Activated B cell treated with CpG ODN at 0.5 μM for 24 hours (primary cell): ENCODE measurements at regions of chr11 and their contacts with region 1.

Region 1: DNA sequence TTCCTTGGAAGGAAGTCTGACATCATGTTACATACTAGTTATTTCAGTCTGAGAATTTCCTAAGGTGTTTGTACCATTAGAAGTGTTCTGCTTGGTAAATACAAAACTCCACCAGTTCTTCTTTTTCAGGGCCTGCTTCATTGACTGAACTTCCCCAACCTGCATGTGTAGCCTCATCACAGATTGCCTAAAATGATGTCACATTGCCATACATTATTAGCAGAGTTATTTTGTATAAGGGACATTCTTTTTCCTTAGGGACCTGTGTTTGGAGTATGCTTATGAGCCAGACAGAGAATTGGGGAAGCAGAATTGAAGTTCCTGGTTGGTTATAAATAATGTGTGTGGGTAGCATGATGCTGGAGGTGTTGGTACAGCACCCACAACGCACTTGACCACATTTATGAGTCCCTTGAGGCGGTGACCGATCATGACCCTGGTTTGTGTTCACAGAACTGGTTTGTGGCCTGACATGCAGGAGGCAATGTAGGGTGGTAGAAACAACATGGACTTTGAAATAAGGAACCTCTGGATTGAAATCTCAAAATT is 16.4 kb upstream of the MMP7 start:
- DNase-seq: peak; percentile 52
- ATAC-seq: peak; percentile 79
- H3K4me3 Mint-ChIP-seq: peak overlapping the region; percentile 52
- H3K27ac Mint-ChIP-seq: peak overlapping the region; percentile 91
- H3K4me1 Mint-ChIP-seq: peaks cover 72% of the 10 kb centered on the region
- H3K27me3 Mint-ChIP-seq: no peaks in the 10 kb centered on the region
- CTCF ChIP-seq: no peak

Region 2: GRCh38 chr11:101914738-101915426 is 632.1 kb before region 1 on chr11 and contains the start of gene CEP126:
- CTCF ChIA-PET with region 1: no interaction called
- POLR2A ChIA-PET with region 1: no interaction called
- intact Hi-C with region 1: loop called (anchors 5 kb)
- DNase-seq: peak; percentile 98
- ATAC-seq: peak; percentile 90
- H3K4me3 Mint-ChIP-seq: peak within 1 kb of the TSS; percentile 94
- H3K27ac Mint-ChIP-seq: peak within 1 kb of the TSS; percentile 95
- H3K4me1 Mint-ChIP-seq: peaks cover 27% of the 10 kb centered on the region
- H3K27me3 Mint-ChIP-seq: peaks cover 10% of the 10 kb centered on the region
- CTCF ChIP-seq: no peak
- total RNA-seq, gene CEP126: 1.4 and 1.5 TPM in 2 replicates

Region 3: DNA sequence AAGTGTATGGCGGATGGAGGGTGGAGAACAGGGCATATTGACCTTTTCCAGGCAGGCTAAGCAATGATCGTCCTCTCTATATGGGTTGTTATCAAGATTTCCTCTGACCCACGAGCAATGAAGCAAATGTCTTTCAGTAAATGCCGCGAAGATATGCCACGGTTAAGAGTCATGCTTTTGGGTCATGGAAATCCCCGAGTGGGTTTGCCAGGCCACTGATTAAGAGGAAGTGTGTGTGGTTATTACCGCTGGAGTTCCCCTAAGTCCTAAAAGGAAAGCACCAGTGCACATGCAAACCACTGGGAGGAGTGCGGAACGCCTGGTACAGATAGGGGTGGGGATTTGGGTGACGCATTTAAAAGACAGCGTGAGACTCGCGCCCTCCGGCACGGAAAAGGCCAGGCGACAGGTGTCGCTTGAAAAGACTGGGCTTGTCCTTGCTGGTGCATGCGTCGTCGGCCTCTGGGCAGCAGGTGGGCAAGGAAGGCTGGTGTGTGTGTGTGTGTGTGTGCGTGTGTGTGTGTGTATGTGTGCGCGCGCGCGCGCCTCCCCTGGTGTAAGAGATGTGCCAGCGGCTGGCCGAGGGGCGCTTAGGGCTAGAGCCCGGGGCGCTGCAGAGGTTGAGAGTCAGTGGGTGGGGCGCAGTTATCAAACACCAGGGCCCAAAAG is 229.8 kb before region 1 on chr11 and contains the start of gene BIRC3:
- CTCF ChIA-PET with region 1: no interaction called
- POLR2A ChIA-PET with region 1: interaction called, 9 read pairs
- intact Hi-C with region 1: loop called (anchors 1 kb)
- DNase-seq: peak; percentile 82
- ATAC-seq: peak; percentile 84
- H3K4me3 Mint-ChIP-seq: peak within 1 kb of the TSS; percentile 98
- H3K27ac Mint-ChIP-seq: peak within 1 kb of the TSS; percentile 98
- H3K4me1 Mint-ChIP-seq: peaks cover 77% of the 10 kb centered on the region
- H3K27me3 Mint-ChIP-seq: no peaks in the 10 kb centered on the region
- CTCF ChIP-seq: no peak
- total RNA-seq, gene BIRC3: 236 and 270 TPM in 2 replicates

Region 4: DNA sequence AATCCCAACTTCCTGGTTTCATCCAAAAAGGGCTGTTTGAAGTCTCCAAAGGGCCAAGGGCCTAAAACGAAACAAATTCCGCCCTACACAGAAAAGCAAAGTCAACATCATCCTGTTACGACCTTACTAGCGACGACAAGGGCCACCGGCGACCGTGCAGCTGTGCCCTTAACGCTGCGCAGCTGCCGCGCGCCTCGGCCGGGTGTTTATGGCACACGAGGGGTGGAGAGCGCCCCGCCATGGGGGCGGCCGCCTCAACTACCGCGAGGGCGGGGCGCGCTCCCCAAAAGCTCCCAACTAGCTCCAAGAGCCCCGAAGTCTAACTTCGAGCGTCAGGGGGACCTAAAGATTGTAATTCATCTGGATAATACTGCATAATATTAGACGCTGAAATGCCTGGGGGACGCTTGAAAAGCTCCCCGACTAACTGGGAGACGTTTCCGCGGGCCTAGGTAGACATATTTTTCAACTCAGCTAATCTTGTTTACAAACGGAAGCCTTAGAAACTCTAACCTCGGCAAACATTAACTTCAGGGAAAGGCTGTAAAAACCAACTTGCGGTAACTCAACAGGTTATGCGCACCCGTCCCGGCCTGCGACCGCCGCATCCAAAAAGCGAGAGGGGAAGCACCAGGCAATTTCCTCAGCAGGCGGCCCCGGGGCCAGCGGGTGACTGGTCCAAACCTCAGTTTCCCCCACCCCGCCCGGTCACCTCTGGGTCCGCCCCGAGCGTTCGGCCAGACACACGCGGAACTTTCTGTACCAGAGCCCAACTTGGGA is 95.1 kb before region 1 on chr11:
- CTCF ChIA-PET with region 1: no interaction called
- POLR2A ChIA-PET with region 1: interaction called, 6 read pairs
- intact Hi-C with region 1: loop called (anchors 1 kb)
- DNase-seq: peak; percentile 61
- ATAC-seq: peak; percentile 57
- H3K4me3 Mint-ChIP-seq: peak overlapping the region; percentile 98
- H3K27ac Mint-ChIP-seq: peak overlapping the region; percentile 99
- H3K4me1 Mint-ChIP-seq: peaks cover 69% of the 10 kb centered on the region
- H3K27me3 Mint-ChIP-seq: no peaks in the 10 kb centered on the region
- CTCF ChIP-seq: no peak

Region 5: GRCh38 chr11:102495161-102496042 is 51.6 kb before region 1 on chr11:
- CTCF ChIA-PET with region 1: interaction called, 5 read pairs
- POLR2A ChIA-PET with region 1: no interaction called
- intact Hi-C with region 1: loop called (anchors 1 kb)
- DNase-seq: no peak
- ATAC-seq: peak; percentile 77
- H3K4me3 Mint-ChIP-seq: no peak overlapping the region
- H3K27ac Mint-ChIP-seq: peak overlapping the region; percentile 53
- H3K4me1 Mint-ChIP-seq: peaks cover 17% of the 10 kb centered on the region
- H3K27me3 Mint-ChIP-seq: no peaks in the 10 kb centered on the region
- CTCF ChIP-seq: no peak

Region 6: DNA sequence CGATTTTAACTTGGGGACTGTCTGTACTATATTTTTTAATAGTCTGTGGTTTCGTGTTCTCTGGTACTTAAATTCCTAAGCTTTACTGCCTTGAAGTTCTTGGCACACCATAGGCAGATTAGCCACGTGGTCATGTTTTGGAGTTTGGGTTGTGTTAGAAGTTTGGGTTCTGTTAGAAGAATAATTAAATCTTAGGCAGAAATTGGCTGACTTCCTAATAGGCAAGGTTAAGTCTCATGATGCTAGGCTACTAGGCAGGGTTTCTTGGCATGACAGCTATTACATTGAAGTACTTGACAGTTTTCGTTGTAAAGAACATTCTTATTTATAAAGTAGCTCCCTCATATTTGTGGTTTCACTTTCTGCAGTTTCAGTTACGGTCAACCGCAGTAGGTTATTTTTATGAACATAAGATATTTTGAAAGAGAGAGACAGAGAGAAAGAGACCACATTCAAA is 13.6 kb after region 1 on chr11:
- CTCF ChIA-PET with region 1: interaction called, 3 read pairs
- POLR2A ChIA-PET with region 1: interaction called, 13 read pairs
- intact Hi-C with region 1: loop called (anchors 1 kb)
- DNase-seq: no peak
- ATAC-seq: peak; percentile 61
- H3K4me3 Mint-ChIP-seq: peak overlapping the region; percentile 72
- H3K27ac Mint-ChIP-seq: peak overlapping the region; percentile 86
- H3K4me1 Mint-ChIP-seq: peaks cover 63% of the 10 kb centered on the region
- H3K27me3 Mint-ChIP-seq: no peaks in the 10 kb centered on the region
- CTCF ChIP-seq: no peak

Region 7: DNA sequence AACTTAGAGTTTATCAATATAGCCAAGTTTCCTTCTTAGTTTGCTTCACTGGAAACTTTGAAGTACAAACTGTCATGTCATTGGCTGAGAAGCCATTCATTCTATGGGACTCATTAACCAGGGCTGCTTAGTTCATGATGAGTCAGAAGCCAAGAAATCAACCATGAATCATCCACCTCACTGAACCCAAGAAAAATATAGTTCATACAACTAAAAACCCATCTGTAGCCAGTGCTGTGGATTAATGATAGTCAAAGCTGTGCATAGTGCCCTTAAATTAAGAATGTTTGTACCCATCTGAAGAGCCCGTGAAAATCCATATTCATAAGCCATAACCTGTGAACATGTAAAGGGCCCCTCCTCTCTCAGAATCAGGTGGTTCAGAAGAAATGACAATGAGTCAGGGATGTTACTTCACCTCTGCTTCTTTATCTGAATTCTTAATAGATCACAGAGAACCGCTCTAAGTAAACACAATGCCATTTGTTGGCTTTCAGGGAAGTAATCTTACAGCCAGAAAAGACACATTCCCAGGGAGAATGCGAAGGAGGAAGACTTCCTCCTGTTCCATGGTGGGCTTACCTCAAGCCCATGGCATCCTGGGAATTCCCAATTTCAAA is 52.8 kb after region 1 on chr11:
- CTCF ChIA-PET with region 1: no interaction called
- POLR2A ChIA-PET with region 1: interaction called, 4 read pairs
- intact Hi-C with region 1: loop called (anchors 1 kb)
- DNase-seq: no peak
- ATAC-seq: peak; percentile 93
- H3K4me3 Mint-ChIP-seq: no peak overlapping the region
- H3K27ac Mint-ChIP-seq: peak overlapping the region; percentile 32
- H3K4me1 Mint-ChIP-seq: peaks cover 28% of the 10 kb centered on the region
- H3K27me3 Mint-ChIP-seq: no peaks in the 10 kb centered on the region
- CTCF ChIP-seq: no peak